AG04449 (cell line): ENCODE measurements at regions of chr10 and their contacts with region 1.

Region 1: DNA sequence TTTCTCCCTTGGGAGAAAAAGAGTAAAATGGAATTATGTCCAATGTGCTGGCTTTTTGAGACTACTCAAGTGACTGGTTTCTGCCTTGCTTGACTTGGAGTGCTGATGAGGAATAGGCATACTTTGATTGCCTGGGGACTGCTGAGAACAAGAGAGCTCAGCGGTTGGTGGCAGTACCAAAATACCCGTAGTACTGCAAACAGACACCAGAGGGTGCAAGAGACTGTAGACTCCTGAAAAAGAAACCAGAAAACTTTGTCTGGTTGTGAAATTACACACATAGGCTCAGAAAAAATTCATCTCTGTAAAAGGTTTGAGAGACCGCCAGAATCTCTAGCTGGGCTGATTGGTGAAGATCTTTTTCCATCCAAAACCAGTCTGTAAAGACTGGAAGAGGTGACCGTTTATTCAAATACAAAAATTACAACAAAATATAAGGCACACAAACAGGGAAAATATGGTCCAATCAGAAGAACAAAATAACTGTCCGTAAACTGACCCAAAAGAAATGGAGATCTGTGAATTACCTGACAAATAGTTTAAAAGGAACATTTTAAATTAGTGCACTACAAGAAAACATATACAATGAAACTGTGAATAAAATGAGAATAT is 18.5 kb downstream of the BICC1 start:
- DNase-seq: no peak
- H3K4me3 ChIP-seq: no peak overlapping the region
- CTCF ChIP-seq: peak; percentile 61

Region 2: DNA sequence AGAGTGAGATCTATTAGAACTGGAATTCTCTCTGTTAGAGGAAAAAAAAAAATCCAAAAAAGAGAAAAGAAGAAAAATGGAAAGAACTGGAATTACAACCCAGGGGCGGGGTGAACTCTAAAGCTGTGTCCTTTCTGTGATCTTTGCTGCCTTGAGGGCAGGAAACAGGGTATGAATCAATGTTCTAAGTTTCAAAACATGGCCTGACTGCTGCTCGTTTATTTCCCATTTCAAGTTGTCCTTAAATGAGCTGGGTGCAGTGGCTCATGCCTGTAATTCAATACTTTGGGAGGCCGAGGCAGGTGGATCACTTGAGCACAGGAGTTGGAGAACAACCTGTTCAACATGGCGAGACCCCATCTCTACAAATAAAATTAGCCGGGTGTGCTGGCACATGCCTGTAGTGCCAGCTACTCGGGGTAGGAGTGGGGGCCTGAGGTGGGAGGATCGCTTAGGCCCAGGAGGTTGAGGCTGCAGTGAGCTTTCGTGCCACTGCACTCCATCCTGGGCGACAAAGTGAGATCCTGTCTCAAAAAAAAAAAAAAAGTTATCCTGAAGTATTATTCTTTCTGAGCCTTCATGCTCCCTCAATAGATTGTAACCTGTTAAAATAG is 170.7 kb before region 1 on chr10:
- CTCF ChIA-PET with region 1: no interaction called
- POLR2A ChIA-PET with region 1: no interaction called
- DNase-seq: no peak
- H3K4me3 ChIP-seq: no peak overlapping the region
- CTCF ChIP-seq: no peak

Region 3: GRCh38 chr10:58486821-58487220 is 44.4 kb before region 1 on chr10:
- CTCF ChIA-PET with region 1: no interaction called
- POLR2A ChIA-PET with region 1: no interaction called
- DNase-seq: no peak
- H3K4me3 ChIP-seq: no peak overlapping the region
- CTCF ChIP-seq: no peak

Region 4: DNA sequence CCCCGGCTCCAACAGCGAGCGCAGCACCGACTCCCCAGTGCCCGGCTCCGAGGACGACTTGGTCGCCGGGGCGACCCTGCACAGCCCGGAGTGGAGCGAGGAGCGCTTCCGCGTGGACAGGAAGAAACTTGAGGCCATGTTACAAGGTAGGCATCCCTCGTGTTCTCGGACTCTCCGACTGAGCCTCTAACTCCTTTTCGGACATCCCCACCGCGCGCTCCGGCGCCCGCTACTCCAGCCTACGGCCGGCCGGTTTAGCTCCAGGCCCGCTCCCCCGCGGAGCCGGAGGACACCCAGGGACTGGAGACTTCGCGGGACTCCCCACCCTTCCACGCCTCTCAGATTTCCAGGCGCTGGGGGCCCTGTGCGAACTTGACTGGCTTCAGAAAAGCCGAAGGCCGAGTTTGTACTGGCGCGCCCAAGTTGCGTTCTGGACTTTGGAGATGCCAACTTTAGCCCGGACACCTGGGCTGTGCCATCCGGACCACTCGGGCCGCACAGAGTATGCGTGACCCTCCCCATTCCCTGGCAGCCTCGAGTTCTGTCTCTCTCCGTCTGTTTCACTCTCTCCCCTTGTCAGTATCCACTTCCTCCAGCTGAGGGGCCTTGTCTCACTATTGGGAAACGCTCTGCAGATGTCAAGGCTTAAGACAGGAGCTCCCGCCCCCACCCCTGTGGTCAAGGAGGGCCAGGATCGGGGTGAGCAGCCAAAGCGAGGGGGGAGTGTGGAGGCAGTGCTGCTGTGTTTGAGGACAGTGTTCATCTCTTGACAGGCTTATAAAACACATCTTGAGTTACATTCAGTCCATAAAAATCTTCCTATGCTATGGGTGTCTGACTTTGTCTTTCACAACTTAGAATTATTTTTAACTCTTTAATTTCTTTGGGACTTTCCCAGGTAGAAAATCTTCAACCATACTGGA is 17.7 kb before region 1 on chr10:
- CTCF ChIA-PET with region 1: interaction called, 52 read pairs
- POLR2A ChIA-PET with region 1: interaction called, 3 read pairs
- DNase-seq: no peak
- H3K4me3 ChIP-seq: peak overlapping the region; percentile 67
- CTCF ChIP-seq: no peak

Region 5: DNA sequence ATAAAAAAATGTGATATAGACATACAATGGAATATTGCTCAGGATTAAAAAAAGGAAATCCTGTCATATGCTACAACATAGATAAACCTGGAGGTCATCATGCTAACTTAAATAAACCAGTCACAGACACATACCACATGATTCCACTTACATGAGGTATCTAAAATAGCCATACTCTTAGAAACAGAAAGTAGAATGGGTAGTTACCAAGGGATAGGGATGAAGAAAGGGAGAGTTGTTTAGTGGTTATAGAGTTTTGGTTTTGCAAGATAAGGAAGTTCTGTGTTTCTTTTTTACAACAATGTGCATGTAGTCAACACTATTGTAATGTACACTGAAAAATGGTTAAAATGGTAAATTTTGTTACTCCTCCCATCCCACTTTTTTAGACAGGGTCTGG is 12.0 kb after region 1 on chr10:
- CTCF ChIA-PET with region 1: interaction called, 21 read pairs
- POLR2A ChIA-PET with region 1: no interaction called
- DNase-seq: no peak
- H3K4me3 ChIP-seq: no peak overlapping the region
- CTCF ChIP-seq: no peak

Region 6: DNA sequence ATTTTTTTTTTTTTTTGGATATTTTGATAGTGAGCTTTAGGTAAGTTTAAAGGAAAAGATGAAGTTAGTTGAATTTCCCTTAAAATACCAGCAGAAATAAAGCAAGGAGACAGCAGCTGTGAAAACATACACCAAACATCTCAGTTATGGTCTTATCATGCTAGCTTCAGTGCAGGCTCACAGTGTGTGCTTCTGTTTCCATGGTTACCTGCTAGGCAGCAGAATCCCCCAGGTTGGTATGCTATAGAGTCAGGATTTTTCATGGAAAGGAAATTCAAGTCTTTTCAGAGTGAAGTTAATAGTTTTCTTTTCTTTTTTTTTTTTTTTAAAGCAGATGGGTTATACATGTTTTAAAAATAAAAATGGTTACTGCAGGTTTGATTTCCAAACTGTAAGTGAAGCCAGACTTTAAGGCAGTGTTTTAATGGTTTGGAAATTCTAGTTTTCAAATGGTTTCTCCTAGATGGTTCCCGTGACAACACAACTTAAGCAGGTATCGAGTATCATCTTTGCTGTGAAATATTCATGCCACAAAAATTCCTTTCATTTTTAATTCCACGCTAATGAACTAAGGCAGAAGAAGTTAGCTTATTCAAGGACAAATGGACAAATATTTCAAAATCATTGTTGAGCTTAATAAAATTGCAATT is 212.4 kb after region 1 on chr10:
- CTCF ChIA-PET with region 1: interaction called, 10 read pairs
- POLR2A ChIA-PET with region 1: no interaction called
- DNase-seq: peak; percentile 59
- H3K4me3 ChIP-seq: no peak overlapping the region
- CTCF ChIP-seq: no peak

Region 7: DNA sequence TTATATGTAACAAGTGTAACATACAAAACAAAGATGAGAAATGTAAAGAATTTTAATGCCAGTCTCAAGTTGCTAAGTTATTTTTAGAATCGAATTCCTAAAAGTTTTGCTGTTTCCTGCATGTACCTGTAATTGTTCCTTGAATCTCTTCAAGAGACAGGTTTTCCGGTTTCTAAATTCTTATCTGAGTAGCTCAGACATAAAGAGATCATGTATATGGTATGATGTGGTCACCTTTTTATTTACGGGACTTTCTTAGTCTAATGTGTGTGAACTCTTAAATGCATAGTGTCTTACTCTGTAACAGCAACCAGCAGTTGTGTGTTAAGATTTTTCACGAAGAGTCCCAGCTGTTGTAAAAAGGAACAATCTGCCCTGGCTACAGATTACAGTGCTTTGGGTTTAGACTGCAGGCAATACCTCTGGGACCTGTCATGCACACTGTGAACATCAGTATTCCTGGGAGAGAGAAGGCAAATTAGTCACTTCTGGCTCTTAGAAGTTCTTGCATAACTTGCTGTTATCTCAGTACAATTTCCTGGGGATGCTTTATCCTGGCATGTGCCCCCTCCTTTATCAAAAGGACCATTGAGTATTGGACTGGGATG is 244.9 kb after region 1 on chr10:
- CTCF ChIA-PET with region 1: interaction called, 29 read pairs
- POLR2A ChIA-PET with region 1: no interaction called
- DNase-seq: no peak
- H3K4me3 ChIP-seq: no peak overlapping the region
- CTCF ChIP-seq: no peak

Region 8: GRCh38 chr10:58952747-58953466 is 421.7 kb after region 1 on chr10:
- CTCF ChIA-PET with region 1: interaction called, 11 read pairs
- POLR2A ChIA-PET with region 1: no interaction called
- DNase-seq: no peak
- H3K4me3 ChIP-seq: no peak overlapping the region
- CTCF ChIP-seq: peak; percentile 63